Common myeloid progenitor, CD34-positive (primary cell): ENCODE measurements at regions of chr16 and their contacts with region 1.

Region 1: GRCh38 chr16:1428511-1428910 is 2.4 kb upstream of the PERCC1 start:
- DNase-seq: peak; percentile 48 to 66 (median 66)
- H3K4me3 ChIP-seq: peak overlapping the region in 2 of 7 experiments; percentile 26 to 65
- H3K27ac ChIP-seq: no peak overlapping the region
- H3K4me1 ChIP-seq: peaks cover 0 to 48% (median 20%) of the 10 kb centered on the region in 4 experiments
- H3K27me3 ChIP-seq: no peaks in the 10 kb centered on the region

Region 2: DNA sequence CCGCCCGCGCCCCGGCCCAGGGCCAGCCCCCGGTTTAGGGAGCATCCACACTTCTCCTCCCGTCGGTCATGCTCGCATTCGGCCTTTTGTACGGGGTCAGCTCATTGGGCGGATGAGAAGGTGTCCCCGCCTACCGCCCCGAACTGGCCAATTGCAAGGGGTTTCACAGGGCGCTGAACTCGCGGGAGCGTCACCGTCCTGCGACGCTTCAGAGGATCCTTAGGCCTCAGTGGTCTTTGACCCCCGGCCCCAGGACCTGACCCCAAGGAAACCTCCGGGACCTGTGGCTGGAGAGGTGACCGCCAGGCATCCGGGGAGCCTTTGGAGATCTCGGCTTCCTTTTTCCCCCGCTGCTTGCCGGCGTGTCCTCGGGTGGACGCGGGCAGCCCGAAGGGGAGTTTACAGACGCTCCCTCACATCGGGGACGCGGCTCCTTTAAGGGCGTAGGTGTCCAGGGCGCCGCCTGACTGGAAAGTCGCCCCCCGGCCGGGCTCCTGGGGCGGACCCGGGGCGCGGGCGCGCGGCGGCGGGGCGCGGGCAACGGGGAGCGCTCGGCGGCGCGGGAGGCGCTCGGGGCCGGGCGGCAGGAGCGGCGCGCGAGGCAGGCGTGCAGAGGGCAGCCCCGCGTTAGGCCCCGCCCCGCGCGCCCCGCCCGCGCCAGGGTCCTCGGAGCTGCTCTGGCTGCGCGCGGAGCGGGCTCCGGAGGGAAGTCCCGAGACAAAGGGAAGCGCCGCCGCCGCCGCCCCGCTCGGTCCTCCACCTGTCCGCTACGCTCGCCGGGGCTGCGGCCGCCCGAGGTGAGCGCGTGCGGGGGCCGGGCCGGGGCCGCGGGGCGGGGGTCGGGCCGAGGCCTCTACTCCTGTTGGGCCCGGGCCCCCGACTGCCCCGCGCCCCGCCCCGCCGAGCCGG is 119.3 kb before region 1 on chr16 and contains the start of gene UBE2I:
- CTCF ChIA-PET with region 1: no interaction called
- POLR2A ChIA-PET with region 1: no interaction called
- DNase-seq: peak; percentile 98 to 99 (median 99)
- H3K4me3 ChIP-seq: peak within 1 kb of the TSS; percentile 73 to 98 (median 93)
- H3K27ac ChIP-seq: peak within 1 kb of the TSS; percentile 100
- H3K4me1 ChIP-seq: peaks cover 13 to 34% (median 26%) of the 10 kb centered on the region in 4 experiments
- H3K27me3 ChIP-seq: no peaks in the 10 kb centered on the region

Region 3: DNA sequence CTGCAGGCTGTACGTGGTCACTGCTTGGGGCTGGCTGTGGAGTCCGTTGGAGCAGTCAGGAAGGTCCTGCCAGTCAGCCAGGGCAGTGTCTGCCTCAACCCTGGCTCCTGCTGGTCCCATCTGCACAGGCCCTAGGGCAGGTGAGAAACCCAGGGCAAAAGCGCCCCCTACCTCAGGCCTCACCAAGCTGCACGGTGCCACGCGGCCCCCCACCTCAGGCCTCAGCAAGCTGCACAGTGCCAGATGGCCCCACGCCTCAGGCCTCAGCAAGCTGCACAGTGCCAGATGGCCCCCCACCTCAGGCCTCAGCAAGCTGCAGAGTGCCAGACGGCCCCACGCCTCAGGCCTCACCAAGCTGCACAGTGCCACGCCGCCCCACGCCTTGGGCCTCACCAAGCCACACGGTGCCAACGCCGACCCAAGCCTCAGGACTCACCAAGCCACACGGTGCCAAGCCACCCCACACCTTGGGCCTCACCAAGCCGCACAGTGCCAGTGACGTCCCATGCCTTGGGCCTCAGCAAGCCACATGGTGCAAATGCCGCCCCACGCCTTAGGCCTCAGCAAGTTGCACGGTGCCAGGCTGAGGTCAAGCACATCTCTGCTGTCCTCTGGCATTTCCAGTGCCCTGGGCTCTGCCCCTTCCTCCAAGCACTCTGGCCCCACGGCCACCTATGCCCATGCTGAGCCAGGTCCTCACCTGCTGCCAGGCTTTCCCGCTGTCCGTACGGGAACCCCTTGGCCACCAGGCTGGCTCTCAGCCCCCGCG is 110.5 kb after region 1 on chr16:
- CTCF ChIA-PET with region 1: interaction called, 14 read pairs
- POLR2A ChIA-PET with region 1: interaction called, 3 read pairs
- DNase-seq: peak in 2 of 3 donors; percentile 53 to 59
- H3K4me3 ChIP-seq: no peak overlapping the region
- H3K27ac ChIP-seq: no peak overlapping the region
- H3K4me1 ChIP-seq: peaks cover 6 to 65% (median 59%) of the 10 kb centered on the region in 4 experiments
- H3K27me3 ChIP-seq: no peaks in the 10 kb centered on the region